ENCODE measurements at regions of chr5 and their contacts with region 1.

Region 1: GRCh38 chr5:92838253-92838652 is 742.8 kb downstream of the NR2F1-AS1 start:
- DNase-seq: peak in 1 of 2 experiments; percentile 56
- H3K4me3 ChIP-seq: no peak overlapping the region
- H3K4me3 Mint-ChIP-seq: no peak overlapping the region
- H3K27ac Mint-ChIP-seq: no peak overlapping the region
- H3K4me1 ChIP-seq: no peaks in the 10 kb centered on the region
- H3K4me1 Mint-ChIP-seq: peaks cover under 1% of the 10 kb centered on the region
- H3K27me3 ChIP-seq: no peaks in the 10 kb centered on the region
- H3K27me3 Mint-ChIP-seq: no peaks in the 10 kb centered on the region
- CTCF ChIP-seq: peak; percentile 58 to 63

Region 2: DNA sequence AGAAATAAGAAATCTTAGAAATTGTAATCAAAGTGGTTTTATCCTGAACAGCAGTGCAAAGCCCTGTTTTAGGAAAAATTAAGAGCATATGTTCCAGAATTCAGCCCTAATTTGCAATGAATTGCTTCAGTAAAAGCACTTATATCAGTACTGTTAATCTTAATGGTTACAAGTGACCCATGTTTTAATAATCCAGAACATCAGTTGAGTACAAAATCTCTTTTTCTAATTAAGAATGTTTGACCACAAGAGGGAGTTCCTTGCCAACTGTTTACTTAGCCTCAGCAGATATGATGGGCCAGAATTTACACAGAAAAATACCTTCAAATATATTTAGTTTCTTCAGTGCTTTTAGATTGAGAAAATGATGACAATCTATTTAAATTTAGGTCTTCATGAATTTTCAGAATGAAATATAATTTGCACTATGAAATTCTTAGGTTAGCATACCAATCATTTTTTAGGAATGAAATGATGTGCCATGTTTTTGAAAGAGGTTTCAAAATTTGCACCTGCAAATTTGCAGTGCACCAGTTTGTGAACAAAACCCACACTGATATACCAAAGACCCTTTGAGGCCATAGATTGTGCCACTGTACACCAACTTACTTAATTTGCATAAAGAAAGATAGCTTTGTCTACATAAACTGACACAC is 528.8 kb before region 1 on chr5:
- CTCF ChIA-PET with region 1: no interaction called
- POLR2A ChIA-PET with region 1: no interaction called
- intact Hi-C with region 1: loop called (anchors 1 kb)
- DNase-seq: no peak
- H3K4me3 ChIP-seq: no peak overlapping the region
- H3K4me3 Mint-ChIP-seq: no peak overlapping the region
- H3K27ac Mint-ChIP-seq: no peak overlapping the region
- H3K4me1 ChIP-seq: no peaks in the 10 kb centered on the region
- H3K4me1 Mint-ChIP-seq: no peaks in the 10 kb centered on the region
- H3K27me3 ChIP-seq: no peaks in the 10 kb centered on the region
- H3K27me3 Mint-ChIP-seq: no peaks in the 10 kb centered on the region
- CTCF ChIP-seq: peak; percentile 59 to 68

Region 3: GRCh38 chr5:92518318-92518904 is 319.8 kb before region 1 on chr5:
- CTCF ChIA-PET with region 1: no interaction called
- POLR2A ChIA-PET with region 1: no interaction called
- intact Hi-C with region 1: loop called (anchors 1 kb)
- DNase-seq: peak in 1 of 2 experiments; percentile 11
- H3K4me3 ChIP-seq: no peak overlapping the region
- H3K4me3 Mint-ChIP-seq: no peak overlapping the region
- H3K27ac Mint-ChIP-seq: no peak overlapping the region
- H3K4me1 ChIP-seq: 0 out of 2 replicates have a peak, but pooled peaks cover 3% of the 10 kb centered on the region
- H3K4me1 Mint-ChIP-seq: no peaks in the 10 kb centered on the region
- H3K27me3 ChIP-seq: no peaks in the 10 kb centered on the region
- H3K27me3 Mint-ChIP-seq: no peaks in the 10 kb centered on the region
- CTCF ChIP-seq: peak; percentile 56 to 70

Region 4: DNA sequence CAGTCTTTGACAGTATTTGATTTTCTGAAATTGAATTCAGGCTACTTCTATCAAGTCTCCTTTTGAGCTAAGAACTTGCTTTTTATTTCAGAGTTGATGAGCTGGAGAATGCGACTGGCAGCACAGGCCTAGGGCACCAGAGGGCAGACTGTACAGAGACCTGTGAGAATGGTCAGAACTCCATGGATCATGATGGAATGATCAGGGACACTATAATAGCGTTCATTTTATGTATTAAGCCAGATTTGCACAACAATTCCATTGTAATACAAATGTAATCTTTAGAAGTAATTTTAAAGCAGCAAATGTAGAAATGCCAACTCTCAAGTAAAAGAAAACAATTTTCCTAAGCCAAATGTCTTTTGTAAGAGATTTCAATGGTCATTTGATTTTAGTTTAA is 159.6 kb before region 1 on chr5:
- CTCF ChIA-PET with region 1: no interaction called
- POLR2A ChIA-PET with region 1: no interaction called
- intact Hi-C with region 1: loop called (anchors 1 kb)
- DNase-seq: peak in 1 of 2 experiments; percentile 15
- H3K4me3 ChIP-seq: no peak overlapping the region
- H3K4me3 Mint-ChIP-seq: no peak overlapping the region
- H3K27ac Mint-ChIP-seq: no peak overlapping the region
- H3K4me1 ChIP-seq: no peaks in the 10 kb centered on the region
- H3K4me1 Mint-ChIP-seq: no peaks in the 10 kb centered on the region
- H3K27me3 ChIP-seq: no peaks in the 10 kb centered on the region
- H3K27me3 Mint-ChIP-seq: no peaks in the 10 kb centered on the region
- CTCF ChIP-seq: peak in 1 of 2 experiments; percentile 38

Region 5: GRCh38 chr5:92687821-92688722 is 150.2 kb before region 1 on chr5:
- CTCF ChIA-PET with region 1: interaction called, 14 read pairs
- POLR2A ChIA-PET with region 1: no interaction called
- intact Hi-C with region 1: loop called (anchors 1 kb)
- DNase-seq: peak; percentile 38 to 40
- H3K4me3 ChIP-seq: no peak overlapping the region
- H3K4me3 Mint-ChIP-seq: no peak overlapping the region
- H3K27ac Mint-ChIP-seq: no peak overlapping the region
- H3K4me1 ChIP-seq: no peaks in the 10 kb centered on the region
- H3K4me1 Mint-ChIP-seq: no peaks in the 10 kb centered on the region
- H3K27me3 ChIP-seq: no peaks in the 10 kb centered on the region
- H3K27me3 Mint-ChIP-seq: no peaks in the 10 kb centered on the region
- CTCF ChIP-seq: peak; percentile 43 to 44

Region 6: DNA sequence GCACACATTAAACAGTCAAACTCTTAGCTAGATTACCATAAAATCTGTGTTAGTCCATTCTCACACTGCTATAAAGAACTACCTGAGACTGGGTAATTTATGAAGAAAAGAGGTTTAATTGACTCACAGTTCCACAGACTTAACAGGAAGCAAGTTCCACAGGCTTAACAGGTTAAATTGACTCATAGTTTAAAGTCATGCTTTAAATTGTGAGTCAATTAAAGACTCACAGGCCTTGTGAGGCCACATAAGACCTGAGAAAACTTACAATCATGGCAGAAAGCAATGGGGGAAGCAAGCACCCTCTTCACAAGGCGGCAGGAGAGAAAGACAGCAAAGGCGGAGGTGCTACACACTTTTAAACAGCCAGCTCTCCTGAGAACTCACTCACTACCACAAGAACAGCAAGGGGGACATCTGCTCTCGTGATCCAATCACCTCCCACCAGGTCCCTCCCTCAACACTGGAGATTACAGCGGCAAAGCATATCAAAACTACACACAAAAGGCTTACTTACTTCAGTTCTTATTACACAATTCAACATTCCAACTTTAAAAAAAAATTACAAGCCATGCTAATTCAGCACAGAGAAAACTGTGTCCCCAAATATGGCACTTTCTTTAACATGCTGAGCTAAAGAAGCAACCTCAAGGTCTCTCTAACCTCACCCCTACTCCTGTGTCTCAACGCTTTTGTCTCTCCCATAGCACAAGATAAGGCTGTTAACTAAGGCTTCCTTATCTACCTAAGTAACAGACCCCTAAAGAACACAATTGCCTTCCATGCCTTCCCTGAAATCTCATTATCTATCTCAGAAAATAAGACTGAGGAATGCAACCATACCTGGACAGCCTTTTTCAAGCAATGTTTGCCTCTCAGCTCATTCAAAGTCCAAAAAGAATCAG is 62.3 kb before region 1 on chr5:
- CTCF ChIA-PET with region 1: no interaction called
- POLR2A ChIA-PET with region 1: no interaction called
- intact Hi-C with region 1: loop called (anchors 1 kb)
- DNase-seq: peak; percentile 46 to 50
- H3K4me3 ChIP-seq: no peak overlapping the region
- H3K4me3 Mint-ChIP-seq: peak overlapping the region; percentile 57
- H3K27ac Mint-ChIP-seq: peak overlapping the region; percentile 82
- H3K4me1 ChIP-seq: peaks cover 41% of the 10 kb centered on the region
- H3K4me1 Mint-ChIP-seq: peaks cover 33% of the 10 kb centered on the region
- H3K27me3 ChIP-seq: no peaks in the 10 kb centered on the region
- H3K27me3 Mint-ChIP-seq: no peaks in the 10 kb centered on the region
- CTCF ChIP-seq: no peak

Region 7: DNA sequence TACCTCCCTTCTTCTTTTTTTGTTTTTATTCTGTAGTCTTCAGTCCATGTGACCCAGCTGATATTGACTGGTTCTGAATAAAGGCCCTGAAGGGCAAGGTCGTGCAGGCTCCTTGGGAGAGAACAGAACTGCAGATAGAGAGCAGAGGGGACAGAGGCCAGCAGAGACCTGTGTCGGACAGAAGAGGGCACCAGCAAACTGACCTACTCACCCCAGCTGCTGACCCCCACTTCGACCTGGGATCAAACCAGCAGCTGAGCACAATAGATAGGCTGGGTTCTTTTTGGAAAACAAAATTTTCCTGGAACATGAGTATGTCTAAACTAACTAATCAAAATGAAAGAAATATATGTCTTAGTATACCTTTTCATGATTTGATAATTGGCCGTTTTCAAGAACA is 47.7 kb after region 1 on chr5:
- CTCF ChIA-PET with region 1: no interaction called
- POLR2A ChIA-PET with region 1: no interaction called
- intact Hi-C with region 1: no loop called
- DNase-seq: peak; percentile 34 to 40
- H3K4me3 ChIP-seq: no peak overlapping the region
- H3K4me3 Mint-ChIP-seq: no peak overlapping the region
- H3K27ac Mint-ChIP-seq: no peak overlapping the region
- H3K4me1 ChIP-seq: no peaks in the 10 kb centered on the region
- H3K4me1 Mint-ChIP-seq: no peaks in the 10 kb centered on the region
- H3K27me3 ChIP-seq: no peaks in the 10 kb centered on the region
- H3K27me3 Mint-ChIP-seq: no peaks in the 10 kb centered on the region
- CTCF ChIP-seq: peak in 1 of 2 experiments; percentile 57